ENCODE measurements at regions of chr7 and their contacts with region 1.

Region 1: DNA sequence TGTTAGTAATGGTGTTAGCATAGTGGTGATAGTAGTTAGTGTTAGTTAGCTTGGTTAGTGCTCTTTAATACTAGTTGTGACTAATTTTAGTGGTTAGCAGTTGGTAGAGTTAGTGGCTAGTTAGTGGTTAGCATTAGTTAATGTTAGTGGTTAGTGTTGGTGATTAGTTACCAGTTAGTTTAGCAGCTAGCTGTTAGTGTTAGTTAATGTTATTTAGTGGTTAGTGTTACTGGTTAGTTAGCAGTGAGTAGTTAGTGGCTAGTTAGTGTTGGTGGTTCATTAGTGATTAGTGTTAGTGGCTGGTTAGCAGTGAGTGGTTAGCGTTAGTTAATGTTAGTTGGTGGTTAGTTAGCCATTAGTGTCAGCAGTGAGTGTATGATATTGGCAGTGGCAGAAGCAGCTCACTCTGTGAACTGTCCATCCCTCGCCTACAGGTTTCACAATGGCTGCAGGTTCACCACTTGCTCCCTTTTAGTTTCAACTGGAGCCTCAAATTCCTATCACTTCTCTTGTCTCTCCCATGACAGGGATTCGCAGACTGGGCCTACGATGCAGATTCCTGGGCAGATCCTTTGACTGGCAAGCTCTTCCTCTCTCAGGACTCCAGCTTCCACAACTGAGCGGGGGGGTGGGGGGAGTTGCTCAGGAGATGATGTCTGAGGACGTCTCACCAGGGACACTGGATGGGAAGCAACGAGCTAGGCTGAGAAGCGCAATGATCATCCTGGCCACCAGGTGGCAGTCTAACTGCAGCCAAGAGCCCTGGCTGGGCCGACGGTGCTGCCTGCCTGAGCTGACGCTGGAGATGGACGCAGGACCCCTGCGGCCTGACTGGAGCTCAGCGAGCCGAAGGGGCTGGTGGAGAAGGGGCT is 19.5 kb downstream of the GHRHR start:
- DNase-seq: no peak
- H3K4me3 ChIP-seq: no peak overlapping the region
- CTCF ChIP-seq: peak; percentile 92

Region 2: GRCh38 chr7:30800785-30801252 is 182.5 kb before region 1 on chr7:
- CTCF ChIA-PET with region 1: interaction called, 21 read pairs
- POLR2A ChIA-PET with region 1: no interaction called
- DNase-seq: no peak
- H3K4me3 ChIP-seq: no peak overlapping the region
- CTCF ChIP-seq: peak; percentile 65

Region 3: DNA sequence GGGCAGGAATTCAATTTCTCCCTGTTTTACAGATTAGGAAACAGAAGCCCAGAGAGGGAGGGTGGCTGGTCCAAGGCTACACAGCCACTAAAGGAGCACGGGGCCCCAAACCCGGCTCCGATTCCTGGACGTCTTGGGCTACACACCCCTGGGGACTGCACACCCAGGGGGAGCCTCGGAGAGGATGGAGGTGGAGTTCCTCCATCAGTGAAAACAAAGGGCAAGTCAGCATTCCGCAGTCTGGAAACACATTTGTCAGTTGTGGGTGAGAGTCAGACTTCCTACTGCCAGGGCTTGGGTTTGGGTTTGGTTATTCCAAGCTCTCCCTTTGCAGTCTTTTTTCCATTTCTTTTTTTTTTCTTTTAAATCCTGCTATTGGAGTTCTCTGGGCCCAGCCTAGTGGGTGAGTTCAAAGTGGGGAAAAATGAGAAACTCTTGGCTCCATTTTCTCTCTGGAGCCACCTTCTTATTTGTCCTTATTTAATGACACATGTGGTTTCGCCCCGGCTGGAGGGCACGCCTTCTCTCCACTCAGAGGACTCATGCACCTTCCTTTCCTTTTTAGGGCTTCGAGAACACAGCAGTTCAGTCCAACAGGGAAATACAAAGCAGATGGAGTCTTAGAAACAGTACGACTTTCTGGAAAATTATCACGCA is 131.5 kb before region 1 on chr7:
- CTCF ChIA-PET with region 1: no interaction called
- POLR2A ChIA-PET with region 1: no interaction called
- DNase-seq: no peak
- H3K4me3 ChIP-seq: no peak overlapping the region
- CTCF ChIP-seq: no peak

Region 4: DNA sequence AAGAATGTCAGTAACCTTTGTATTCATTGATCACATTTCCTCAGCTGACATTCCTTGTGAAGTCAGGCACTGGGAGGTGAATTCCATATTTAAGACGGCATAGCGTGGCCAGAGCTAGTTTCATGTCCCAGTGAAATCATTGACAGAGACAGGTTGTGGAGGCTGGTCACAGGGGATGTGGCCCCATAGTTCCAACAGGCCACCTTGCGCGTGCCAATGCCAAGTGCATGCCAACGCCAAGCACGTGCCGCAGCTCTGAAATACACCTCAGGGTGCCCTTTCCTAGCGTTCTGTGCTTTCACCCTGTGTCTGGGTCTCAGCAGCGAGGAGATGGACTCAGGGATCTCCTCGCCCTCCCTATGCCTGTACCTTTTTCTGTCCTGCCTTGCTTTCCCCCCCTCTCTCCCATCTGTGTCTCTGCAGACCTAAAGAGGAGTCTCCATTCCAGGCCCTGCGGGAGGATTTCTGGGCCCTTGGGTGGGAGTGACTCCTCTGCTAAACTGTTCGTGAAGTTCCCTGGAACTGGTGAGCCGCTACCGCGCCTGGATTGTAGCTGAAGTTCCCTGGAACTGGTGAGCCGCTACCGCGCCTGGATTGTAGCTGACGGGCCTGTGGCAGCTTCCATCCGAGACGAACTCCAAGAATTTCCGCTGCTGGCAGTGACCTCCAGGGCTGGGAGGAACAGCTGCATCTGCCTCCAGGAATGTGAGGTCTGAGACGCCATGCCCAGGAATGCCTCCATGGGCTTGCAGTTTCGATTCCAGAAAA is 51.9 kb before region 1 on chr7:
- CTCF ChIA-PET with region 1: interaction called, 15 read pairs
- POLR2A ChIA-PET with region 1: no interaction called
- DNase-seq: no peak
- H3K4me3 ChIP-seq: no peak overlapping the region
- CTCF ChIP-seq: no peak

Region 5: DNA sequence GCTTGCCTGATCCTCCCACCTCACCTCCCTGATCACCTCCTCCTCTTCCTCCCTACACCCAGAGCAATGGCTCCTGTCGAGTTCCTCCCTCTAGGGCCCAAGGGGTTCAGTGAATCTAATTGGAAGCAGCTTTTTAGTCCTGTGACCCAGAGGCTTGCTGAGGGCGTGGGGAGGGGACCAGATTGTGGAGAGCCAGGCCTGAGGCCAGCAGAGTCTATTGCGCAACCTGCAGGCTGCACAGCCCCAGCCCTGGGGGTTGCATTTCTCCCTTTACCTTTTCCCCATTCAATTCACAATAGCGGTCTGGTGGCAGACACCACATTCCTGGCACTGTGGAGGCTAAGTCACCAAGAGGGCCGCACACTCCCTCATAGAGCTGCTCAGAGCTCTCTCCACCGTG is 13.0 kb after region 1 on chr7:
- CTCF ChIA-PET with region 1: interaction called, 14 read pairs
- POLR2A ChIA-PET with region 1: no interaction called
- DNase-seq: no peak
- H3K4me3 ChIP-seq: no peak overlapping the region
- CTCF ChIP-seq: no peak

Region 6: DNA sequence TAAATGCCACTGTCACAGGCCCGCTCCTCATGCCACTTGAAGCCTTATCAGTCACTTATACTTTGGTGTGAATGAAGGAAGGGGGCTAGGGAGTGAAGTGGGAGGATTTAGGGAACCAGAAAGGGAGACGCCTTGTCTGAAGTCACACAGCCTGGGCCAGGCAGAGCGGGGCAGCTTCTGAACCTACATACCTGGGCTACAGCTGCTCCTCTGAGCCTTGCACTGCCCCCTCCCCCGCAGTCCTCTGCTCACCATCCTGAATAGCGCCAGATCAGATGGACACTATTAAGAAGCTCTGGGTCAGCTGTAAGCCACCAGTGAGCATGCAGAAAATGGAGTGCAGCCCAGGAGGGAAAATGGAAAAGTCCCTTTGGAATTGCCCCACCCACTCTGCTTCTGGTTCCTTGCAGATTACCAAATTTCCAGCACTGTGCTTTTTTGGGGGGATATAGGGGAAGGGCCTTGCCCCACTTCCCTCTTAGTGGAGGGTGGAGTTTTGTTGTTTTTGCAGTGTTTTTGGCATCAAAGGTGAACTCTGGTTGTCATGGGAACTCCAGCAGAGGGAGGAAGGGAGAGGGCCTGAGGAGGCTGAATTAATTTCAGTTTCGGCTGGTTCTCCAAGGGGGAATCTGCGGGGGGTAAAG is 33.9 kb after region 1 on chr7:
- CTCF ChIA-PET with region 1: no interaction called
- POLR2A ChIA-PET with region 1: no interaction called
- DNase-seq: no peak
- H3K4me3 ChIP-seq: no peak overlapping the region
- CTCF ChIP-seq: no peak

Measured in AG04449 (cell line).